ENCODE measurements at regions of chr3 and their contacts with region 1.

Region 1: DNA sequence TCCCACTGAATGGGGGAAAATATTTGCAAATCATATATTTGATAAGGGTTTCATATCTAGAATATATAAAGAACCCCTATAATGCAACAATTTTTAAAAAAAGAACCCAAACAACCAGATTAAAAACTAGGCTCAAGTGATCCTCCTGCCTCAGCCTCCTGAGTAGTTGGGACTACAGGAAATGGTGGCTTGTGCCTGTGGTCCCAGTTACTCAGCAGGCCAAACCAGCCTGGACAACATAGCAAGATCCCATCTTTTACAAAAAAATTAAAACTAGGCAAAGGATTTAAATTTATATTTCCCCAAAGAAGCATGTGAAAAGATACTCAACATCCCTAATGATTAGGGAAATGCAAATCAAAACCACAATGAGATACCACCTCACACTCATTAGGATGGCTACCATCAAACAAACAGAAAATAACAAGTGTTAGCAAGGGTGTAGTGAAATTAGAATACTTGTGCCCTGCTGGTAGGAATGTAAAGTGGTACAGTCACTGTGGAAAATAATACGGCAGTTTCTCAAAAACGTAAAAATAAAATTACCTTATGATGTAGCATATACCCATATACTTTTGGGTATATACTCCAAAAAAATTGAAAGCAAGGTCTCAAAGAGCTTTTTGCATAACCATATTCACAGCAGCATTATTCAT is 19.7 kb downstream of the TFDP2 start:
- DNase-seq: no peak
- H3K4me3 ChIP-seq: no peak overlapping the region
- H3K27ac ChIP-seq: no peak overlapping the region
- H3K4me1 ChIP-seq: peaks cover 0 to 3% (median 0%) of the 10 kb centered on the region in 4 donors
- H3K27me3 ChIP-seq: no peaks in the 10 kb centered on the region
- CTCF ChIP-seq: peak in 1 of 3 experiments; percentile 20
- EP300 ChIP-seq: no peak
- POLR2A ChIP-seq: no peak

Region 2: GRCh38 chr3:141959921-141960554 is 169.6 kb before region 1 on chr3:
- intact Hi-C with region 1: loop called (anchors 10 kb)
- DNase-seq: no peak
- H3K4me3 ChIP-seq: no peak overlapping the region
- H3K27ac ChIP-seq: peak overlapping the region; percentile 35 to 74 (median 66)
- H3K4me1 ChIP-seq: peaks cover 0 to 27% (median 23%) of the 10 kb centered on the region in 4 donors
- H3K27me3 ChIP-seq: no peaks in the 10 kb centered on the region
- CTCF ChIP-seq: no peak
- EP300 ChIP-seq: no peak
- POLR2A ChIP-seq: no peak

Region 3: GRCh38 chr3:142087676-142088075 is 42.0 kb before region 1 on chr3:
- intact Hi-C with region 1: no loop called
- DNase-seq: no peak
- H3K4me3 ChIP-seq: no peak overlapping the region
- H3K27ac ChIP-seq: no peak overlapping the region
- H3K4me1 ChIP-seq: no peaks in the 10 kb centered on the region
- H3K27me3 ChIP-seq: no peaks in the 10 kb centered on the region
- CTCF ChIP-seq: no peak
- EP300 ChIP-seq: no peak
- POLR2A ChIP-seq: no peak

Region 4: GRCh38 chr3:142148792-142149672 is 19.4 kb after region 1 on chr3 and contains the start of gene TFDP2:
- intact Hi-C with region 1: no loop called
- DNase-seq: peak; percentile 95
- H3K4me3 ChIP-seq: peak within 1 kb of the TSS; percentile 87 to 93 (median 90)
- H3K27ac ChIP-seq: peak within 1 kb of the TSS; percentile 93 to 97 (median 95)
- H3K4me1 ChIP-seq: peaks cover 15 to 50% (median 45%) of the 10 kb centered on the region in 4 donors
- H3K27me3 ChIP-seq: no peaks in the 10 kb centered on the region
- CTCF ChIP-seq: peak in 1 of 3 experiments; percentile 3
- EP300 ChIP-seq: no peak
- POLR2A ChIP-seq: no peak
- total RNA-seq, gene TFDP2: 41.9 to 134 (median 47.3) TPM

Region 5: GRCh38 chr3:142319094-142319493 is 189.4 kb after region 1 on chr3:
- intact Hi-C with region 1: no loop called
- DNase-seq: no peak
- H3K4me3 ChIP-seq: no peak overlapping the region
- H3K27ac ChIP-seq: no peak overlapping the region
- H3K4me1 ChIP-seq: no peaks in the 10 kb centered on the region
- H3K27me3 ChIP-seq: no peaks in the 10 kb centered on the region
- CTCF ChIP-seq: no peak
- EP300 ChIP-seq: no peak
- POLR2A ChIP-seq: no peak